Astrocyte of the cerebellum (primary cell): ENCODE measurements at regions of chr3 and their contacts with region 1.

Region 1: DNA sequence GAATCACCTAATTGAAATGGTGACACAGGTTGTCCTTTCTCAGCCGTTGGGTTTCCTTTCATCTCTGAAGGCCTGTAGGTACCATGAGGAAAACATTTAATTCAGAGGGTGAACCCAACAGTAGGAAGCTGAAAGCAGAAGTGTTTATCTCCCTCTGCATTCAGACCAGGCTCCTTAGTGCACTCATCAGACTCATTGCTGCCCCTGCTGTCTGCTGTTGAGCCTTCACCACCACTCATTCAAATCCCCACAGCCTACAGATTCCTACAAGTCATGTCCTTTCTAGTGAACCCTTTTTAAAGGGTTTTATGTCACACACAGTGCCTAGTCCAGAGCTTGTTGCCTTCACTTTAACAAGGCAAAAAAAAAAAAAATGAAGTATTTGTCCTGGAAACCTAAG is 13.4 kb downstream of the WDR48 start:
- DNase-seq: peak; percentile 37
- H3K4me3 ChIP-seq: no peak overlapping the region
- CTCF ChIP-seq: peak; percentile 74

Region 2: GRCh38 chr3:39166134-39166731 is 101.0 kb after region 1 on chr3:
- in situ Hi-C with region 1: loop called (anchors 5 kb)
- DNase-seq: no peak
- H3K4me3 ChIP-seq: no peak overlapping the region
- CTCF ChIP-seq: no peak

Region 3: DNA sequence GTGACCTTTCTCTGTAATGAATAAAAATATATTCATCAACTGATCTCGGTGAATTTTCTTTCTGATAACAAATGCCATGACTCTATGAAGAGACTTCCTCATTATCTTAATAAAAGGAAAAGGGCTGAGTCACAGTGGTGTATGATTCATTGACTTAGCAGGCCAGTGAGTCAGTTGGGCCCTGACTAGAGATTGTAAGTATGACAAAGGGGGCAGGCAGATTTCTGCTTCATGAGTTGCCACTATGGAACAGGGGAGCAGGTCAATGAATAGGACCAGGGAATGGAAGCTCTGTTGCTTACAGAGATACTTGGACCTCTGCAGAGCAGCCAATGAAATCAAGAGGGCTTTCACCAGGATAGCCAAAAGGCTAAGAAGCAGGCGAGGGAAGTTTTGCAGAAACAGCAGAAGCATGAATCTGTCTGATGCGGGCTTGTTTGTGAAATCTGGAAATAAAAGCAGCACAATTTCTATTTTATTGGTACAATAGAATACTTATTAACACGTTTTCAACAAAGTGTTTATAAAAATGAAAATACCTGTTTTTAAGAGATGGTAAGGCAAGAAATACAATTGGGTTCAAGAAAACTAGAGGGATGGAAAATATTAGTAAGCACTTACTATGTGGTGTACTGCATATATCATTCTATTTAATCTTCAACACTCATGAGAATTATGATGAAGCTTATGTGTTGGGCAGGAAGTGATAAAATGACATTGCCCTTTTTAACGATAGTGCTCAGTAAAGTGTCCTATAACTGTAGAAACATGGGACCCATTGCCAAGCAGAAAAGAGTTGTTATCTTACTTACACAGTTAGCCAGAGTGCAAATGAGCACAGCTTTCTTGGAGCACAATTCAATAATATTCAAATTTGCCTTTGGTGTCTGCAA is 574.4 kb after region 1 on chr3:
- in situ Hi-C with region 1: no loop called
- DNase-seq: peak; percentile 83
- H3K4me3 ChIP-seq: no peak overlapping the region
- CTCF ChIP-seq: no peak